Activated CD4-positive, alpha-beta T cell treated with anti-CD3 and anti-CD28 coated beads, Interleukin-2, amount 10 ng/mL, durations not matched to agents 7 days and 5 days (primary cell): ENCODE measurements at regions of chr2 and their contacts with region 1.

Region 1: GRCh38 chr2:6896930-6897759 is 19.6 kb downstream of the RSAD2 start:
- DNase-seq: no peak
- H3K4me3 Mint-ChIP-seq: no peak overlapping the region
- H3K27ac Mint-ChIP-seq: peak overlapping the region; percentile 58
- H3K4me1 Mint-ChIP-seq: peaks cover 51% of the 10 kb centered on the region
- H3K27me3 Mint-ChIP-seq: no peaks in the 10 kb centered on the region

Region 2: DNA sequence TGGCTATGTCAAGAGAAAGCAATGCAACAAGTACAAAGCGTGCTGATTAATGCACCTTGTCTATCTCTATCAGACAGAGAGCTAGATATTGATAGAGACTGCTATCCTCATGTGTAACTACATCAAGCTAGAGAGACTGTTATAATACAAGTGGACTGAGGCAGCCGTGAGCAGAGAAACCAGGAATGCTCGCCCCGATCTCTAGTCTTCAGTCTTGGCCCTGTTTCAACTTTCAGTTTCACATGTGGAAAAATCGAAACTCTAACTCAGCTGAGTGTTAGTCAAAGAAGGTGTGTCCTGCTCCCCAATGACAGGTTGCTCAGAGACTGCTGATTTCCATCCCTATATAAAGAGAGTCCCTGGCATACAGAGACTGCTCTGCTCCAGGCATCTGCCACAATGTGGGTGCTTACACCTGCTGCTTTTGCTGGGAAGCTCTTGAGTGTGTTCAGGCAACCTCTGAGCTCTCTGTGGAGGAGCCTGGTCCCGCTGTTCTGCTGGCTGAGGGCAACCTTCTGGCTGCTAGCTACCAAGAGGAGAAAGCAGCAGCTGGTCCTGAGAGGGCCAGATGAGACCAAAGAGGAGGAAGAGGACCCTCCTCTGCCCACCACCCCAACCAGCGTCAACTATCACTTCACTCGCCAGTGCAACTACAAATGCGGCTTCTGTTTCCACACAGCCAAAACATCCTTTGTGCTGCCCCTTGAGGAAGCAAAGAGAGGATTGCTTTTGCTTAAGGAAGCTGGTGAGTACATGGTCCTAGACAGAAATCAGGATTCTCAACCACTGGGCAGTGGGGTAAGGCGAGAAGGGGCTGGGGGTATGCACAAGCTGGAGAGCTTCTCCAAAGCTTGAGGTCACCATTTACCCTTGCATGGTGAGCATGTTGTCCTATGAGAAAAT is 19.5 kb before region 1 on chr2 and contains the start of gene RSAD2:
- CTCF ChIA-PET with region 1: interaction called, 13 read pairs
- POLR2A ChIA-PET with region 1: no interaction called
- DNase-seq: peak; percentile 74
- H3K4me3 Mint-ChIP-seq: peak within 1 kb of the TSS; percentile 99
- H3K27ac Mint-ChIP-seq: peak within 1 kb of the TSS; percentile 94
- H3K4me1 Mint-ChIP-seq: peaks cover 58% of the 10 kb centered on the region
- H3K27me3 Mint-ChIP-seq: no peaks in the 10 kb centered on the region
- total RNA-seq, gene RSAD2: 100 to 101 TPM

Region 3: DNA sequence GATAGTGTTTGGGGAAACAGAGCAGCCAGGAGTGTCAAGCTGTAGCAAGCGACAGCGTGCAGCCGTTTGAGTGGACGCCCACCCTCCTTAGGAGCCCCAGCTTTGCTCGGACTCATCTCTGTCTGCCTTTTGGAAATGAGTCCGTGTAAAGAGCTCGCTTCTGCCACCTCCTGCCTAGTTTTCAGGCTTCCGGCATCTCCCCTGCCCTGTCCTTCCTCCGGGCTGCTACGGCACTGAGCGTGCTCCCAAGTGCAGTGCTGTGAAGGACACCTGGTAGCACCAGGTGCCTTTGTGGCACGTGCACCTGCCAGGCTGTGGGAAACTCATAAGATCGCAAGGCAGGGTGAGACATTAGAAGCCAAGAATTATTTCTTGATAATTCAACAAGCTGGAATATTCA is 137.2 kb after region 1 on chr2:
- CTCF ChIA-PET with region 1: no interaction called
- POLR2A ChIA-PET with region 1: no interaction called
- DNase-seq: no peak
- H3K4me3 Mint-ChIP-seq: no peak overlapping the region
- H3K27ac Mint-ChIP-seq: no peak overlapping the region
- H3K4me1 Mint-ChIP-seq: peaks cover 20% of the 10 kb centered on the region
- H3K27me3 Mint-ChIP-seq: no peaks in the 10 kb centered on the region

Region 4: DNA sequence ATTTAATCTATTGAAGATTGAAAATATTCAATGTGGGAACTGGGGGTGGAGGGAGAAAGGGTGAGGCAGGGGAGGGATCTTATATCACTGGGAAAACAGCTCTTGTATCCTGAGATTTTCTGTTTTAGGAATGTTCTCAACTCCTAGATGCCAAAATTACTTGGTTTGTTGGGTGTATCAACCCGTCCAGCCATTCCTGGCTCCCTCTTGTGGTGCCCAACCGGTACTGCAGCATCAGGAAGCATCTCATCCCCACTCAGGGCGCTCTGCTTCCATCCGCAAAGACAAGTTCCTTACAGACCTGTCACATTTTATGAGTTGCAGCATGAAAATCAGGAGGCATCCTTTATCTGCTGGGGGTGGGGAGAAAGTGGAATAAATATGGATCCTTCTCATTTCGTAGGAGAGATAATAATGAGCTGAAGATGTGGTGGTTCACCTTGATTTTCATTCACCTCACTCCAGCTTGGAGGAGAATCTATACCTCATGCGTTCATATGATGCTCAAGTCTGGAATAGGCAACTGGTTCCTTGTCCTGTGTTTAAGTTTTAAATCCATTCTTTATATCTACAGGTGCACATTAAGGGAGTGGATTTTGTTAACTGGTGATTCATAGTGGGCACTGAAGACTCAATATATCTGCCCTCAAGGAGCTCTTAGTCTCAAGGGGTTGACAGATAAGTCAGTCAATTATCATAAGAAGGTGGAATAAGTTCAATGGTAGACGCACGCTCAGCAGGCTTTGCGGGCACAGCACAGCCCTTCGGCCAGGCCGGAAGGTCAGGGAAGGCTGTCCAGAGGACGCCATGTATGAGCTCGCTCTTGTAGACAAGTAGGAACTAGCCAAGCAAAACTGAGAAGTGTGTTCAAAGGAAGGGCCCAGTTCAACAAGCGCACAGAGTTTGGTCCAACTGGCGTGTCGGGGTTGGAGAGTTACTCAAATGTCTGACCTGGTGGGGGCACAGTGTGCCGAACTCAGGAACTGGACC is 147.4 kb after region 1 on chr2:
- CTCF ChIA-PET with region 1: interaction called, 13 read pairs
- POLR2A ChIA-PET with region 1: no interaction called
- DNase-seq: peak; percentile 61
- H3K4me3 Mint-ChIP-seq: no peak overlapping the region
- H3K27ac Mint-ChIP-seq: no peak overlapping the region
- H3K4me1 Mint-ChIP-seq: peaks cover 30% of the 10 kb centered on the region
- H3K27me3 Mint-ChIP-seq: no peaks in the 10 kb centered on the region